ENCODE measurements at regions of chr11 and their contacts with region 1.

Region 1: GRCh38 chr11:65859200-65859811 is 927 bp upstream of the MUS81 start:
- DNase-seq: peak; percentile 87 to 99 (median 95)
- ATAC-seq: peak; percentile 53
- H3K4me3 ChIP-seq: peak overlapping the region; percentile 90
- H3K4me3 Mint-ChIP-seq: peak overlapping the region; percentile 91
- H3K27ac ChIP-seq: peak overlapping the region; percentile 92 to 96
- H3K27ac Mint-ChIP-seq: peak overlapping the region; percentile 94
- H3K4me1 ChIP-seq: peaks cover 78% of the 10 kb centered on the region
- H3K4me1 Mint-ChIP-seq: peaks cover 57% of the 10 kb centered on the region
- H3K27me3 ChIP-seq: no peaks in the 10 kb centered on the region
- H3K27me3 Mint-ChIP-seq: no peaks in the 10 kb centered on the region
- CTCF ChIP-seq: no peak

Region 2: DNA sequence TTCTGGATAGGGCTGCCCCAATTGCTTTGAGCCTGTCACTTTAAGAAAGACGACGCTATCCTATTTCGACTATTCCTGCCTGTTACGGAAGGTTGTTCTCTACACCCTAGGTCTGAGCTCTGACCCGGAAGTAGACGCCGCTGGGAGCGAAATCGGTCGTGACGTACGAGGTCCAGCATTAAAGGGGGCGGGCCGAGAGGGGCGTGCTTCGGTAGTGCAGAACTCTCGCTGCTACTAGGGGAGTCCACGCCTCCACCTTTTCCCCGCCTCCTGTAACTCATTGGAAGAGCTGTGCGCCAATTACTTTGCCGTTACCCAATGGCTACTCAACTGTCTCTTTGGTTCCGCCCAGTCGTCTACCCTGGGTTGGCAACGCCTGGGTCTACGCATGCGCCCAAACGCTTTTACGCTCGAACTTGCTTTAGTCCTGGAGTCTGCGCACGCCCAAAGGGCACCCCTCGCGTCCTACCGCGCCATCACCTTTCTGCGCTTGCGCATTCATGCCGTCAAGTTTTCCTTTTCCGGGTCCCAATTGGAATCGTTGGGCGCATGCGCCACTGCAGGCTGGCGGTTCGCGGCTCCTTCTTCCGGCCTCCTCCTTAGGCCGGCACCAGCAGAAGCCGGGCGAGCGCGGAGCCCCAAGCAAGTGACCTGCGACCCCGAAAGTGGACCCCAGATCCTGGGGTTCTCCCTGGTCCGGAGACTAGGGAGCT is 243.9 kb before region 1 on chr11 and contains the start of gene PCNX3:
- CTCF ChIA-PET with region 1: interaction called, 10 read pairs
- POLR2A ChIA-PET with region 1: interaction called, 43 read pairs
- intact Hi-C with region 1: loop called (anchors 1 to 5 kb)
- DNase-seq: peak; percentile 99 to 100 (median 100)
- ATAC-seq: peak; percentile 87
- H3K4me3 ChIP-seq: peak within 1 kb of the TSS; percentile 93
- H3K4me3 Mint-ChIP-seq: peak within 1 kb of the TSS; percentile 98
- H3K27ac ChIP-seq: peak within 1 kb of the TSS; percentile 94
- H3K27ac Mint-ChIP-seq: peak within 1 kb of the TSS; percentile 93
- H3K4me1 ChIP-seq: peaks cover 67% of the 10 kb centered on the region
- H3K4me1 Mint-ChIP-seq: peaks cover 46% of the 10 kb centered on the region
- H3K27me3 ChIP-seq: no peaks in the 10 kb centered on the region
- H3K27me3 Mint-ChIP-seq: no peaks in the 10 kb centered on the region
- CTCF ChIP-seq: no peak
- total RNA-seq, gene PCNX3: 37.3 to 40.5 TPM

Region 3: GRCh38 chr11:65720237-65720934 is 138.9 kb before region 1 on chr11 and contains the start of gene RNASEH2C:
- CTCF ChIA-PET with region 1: no interaction called
- POLR2A ChIA-PET with region 1: interaction called, 23 read pairs
- intact Hi-C with region 1: no loop called
- DNase-seq: peak; percentile 52 to 89 (median 68)
- ATAC-seq: peak; percentile 94
- H3K4me3 ChIP-seq: peak within 1 kb of the TSS; percentile 85
- H3K4me3 Mint-ChIP-seq: peak within 1 kb of the TSS; percentile 94
- H3K27ac ChIP-seq: peak within 1 kb of the TSS; percentile 69 to 79
- H3K27ac Mint-ChIP-seq: peak within 1 kb of the TSS; percentile 82
- H3K4me1 ChIP-seq: peaks cover 27% of the 10 kb centered on the region
- H3K4me1 Mint-ChIP-seq: peaks cover 27% of the 10 kb centered on the region
- H3K27me3 ChIP-seq: no peaks in the 10 kb centered on the region
- H3K27me3 Mint-ChIP-seq: no peaks in the 10 kb centered on the region
- CTCF ChIP-seq: no peak
- total RNA-seq, gene RNASEH2C: 25.3 to 25.9 TPM

Region 4: GRCh38 chr11:65803797-65804492 is 55.4 kb before region 1 on chr11:
- CTCF ChIA-PET with region 1: no interaction called
- POLR2A ChIA-PET with region 1: no interaction called
- intact Hi-C with region 1: no loop called
- DNase-seq: no peak
- ATAC-seq: no peak
- H3K4me3 ChIP-seq: no peak overlapping the region
- H3K4me3 Mint-ChIP-seq: no peak overlapping the region
- H3K27ac ChIP-seq: no peak overlapping the region
- H3K27ac Mint-ChIP-seq: no peak overlapping the region
- H3K4me1 ChIP-seq: no peaks in the 10 kb centered on the region
- H3K4me1 Mint-ChIP-seq: no peaks in the 10 kb centered on the region
- H3K27me3 ChIP-seq: peaks cover 15 to 26% of the 10 kb centered on the region in 2 experiments
- H3K27me3 Mint-ChIP-seq: peaks cover 28% of the 10 kb centered on the region
- CTCF ChIP-seq: no peak

Region 5: DNA sequence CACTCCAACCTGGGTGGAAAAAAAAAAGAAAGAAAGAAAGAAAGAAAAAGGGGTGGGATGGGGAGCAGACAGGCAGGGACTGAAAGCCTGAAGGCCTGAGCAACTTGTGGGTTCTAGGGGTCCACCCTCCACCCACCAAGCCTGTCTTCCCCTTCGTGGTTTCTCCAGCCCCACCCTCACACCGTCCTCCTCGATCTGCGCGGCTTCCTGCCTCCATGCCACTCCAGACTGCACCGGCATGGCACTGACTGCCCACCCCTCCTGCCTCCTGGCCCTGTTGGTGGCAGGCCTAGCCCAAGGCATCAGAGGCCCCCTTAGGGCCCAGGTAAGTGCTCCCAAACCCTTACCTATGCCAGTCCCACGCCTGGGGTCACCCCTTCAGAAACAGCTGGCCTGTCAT is 20.3 kb after region 1 on chr11 and contains the start of gene CTSW:
- CTCF ChIA-PET with region 1: interaction called, 37 read pairs
- POLR2A ChIA-PET with region 1: interaction called, 137 read pairs
- intact Hi-C with region 1: loop called in 1 of 2 experiments (anchors 1 kb)
- DNase-seq: peak in 7 of 14 experiments; percentile 29 to 82 (median 61)
- ATAC-seq: peak; percentile 63
- H3K4me3 ChIP-seq: peak within 1 kb of the TSS; percentile 50
- H3K4me3 Mint-ChIP-seq: peak within 1 kb of the TSS; percentile 42
- H3K27ac ChIP-seq: peak within 1 kb of the TSS; percentile 9 to 41
- H3K27ac Mint-ChIP-seq: peak within 1 kb of the TSS; percentile 44
- H3K4me1 ChIP-seq: peaks cover 52% of the 10 kb centered on the region
- H3K4me1 Mint-ChIP-seq: peaks cover 17% of the 10 kb centered on the region
- H3K27me3 ChIP-seq: no peaks in the 10 kb centered on the region
- H3K27me3 Mint-ChIP-seq: no peaks in the 10 kb centered on the region
- CTCF ChIP-seq: no peak
- total RNA-seq, gene CTSW: 20.6 to 21.6 TPM

Region 6: DNA sequence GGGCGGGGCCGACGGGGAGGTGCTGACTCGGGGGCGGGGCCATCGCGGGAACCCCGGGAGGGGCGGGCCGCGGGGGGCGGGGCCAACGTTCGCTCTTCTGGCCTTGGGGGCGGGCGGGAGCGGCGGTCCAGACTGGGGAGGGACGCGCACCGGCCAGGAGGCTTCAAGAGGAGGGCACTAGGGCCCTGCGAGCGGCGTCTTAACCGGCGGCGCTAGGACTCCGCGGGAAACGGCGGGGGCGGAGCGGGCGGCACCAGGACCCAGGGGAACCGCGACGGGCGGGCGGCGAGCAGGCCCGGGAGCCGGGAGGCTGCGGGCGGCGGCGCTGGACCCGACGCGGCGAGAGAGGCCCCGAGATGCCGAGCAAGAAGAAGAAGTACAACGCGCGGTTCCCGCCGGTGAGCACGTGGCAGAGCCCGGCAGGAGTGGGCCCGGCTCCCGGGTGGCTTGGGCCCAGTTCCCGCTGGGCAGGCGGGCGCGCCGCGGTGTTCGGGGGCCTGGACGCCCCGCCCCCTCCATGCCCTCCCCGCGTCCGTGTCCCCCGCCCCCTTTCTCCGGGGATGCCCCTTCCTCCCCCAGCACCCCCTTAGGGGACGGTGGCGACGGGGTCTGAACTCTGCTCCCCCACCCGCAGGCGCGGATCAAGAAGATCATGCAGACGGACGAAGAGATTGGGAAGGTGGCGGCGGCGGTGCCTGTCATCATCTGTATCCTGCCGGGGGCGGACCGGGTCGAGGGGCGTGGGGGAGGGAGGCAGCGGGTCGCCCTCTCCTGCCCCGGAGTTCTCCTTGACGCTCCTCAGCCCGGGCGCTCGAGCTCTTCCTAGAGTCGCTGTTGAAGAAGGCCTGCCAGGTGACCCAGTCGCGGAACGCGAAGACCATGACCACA is 60.1 kb after region 1 on chr11 and contains the start of gene DRAP1:
- CTCF ChIA-PET with region 1: interaction called, 6 read pairs
- POLR2A ChIA-PET with region 1: interaction called, 10 read pairs
- intact Hi-C with region 1: loop called (anchors 1 to 2 kb)
- DNase-seq: peak; percentile 97 to 100 (median 99)
- ATAC-seq: peak; percentile 88
- H3K4me3 ChIP-seq: peak within 1 kb of the TSS; percentile 100
- H3K4me3 Mint-ChIP-seq: peak within 1 kb of the TSS; percentile 94
- H3K27ac ChIP-seq: peak within 1 kb of the TSS; percentile 83 to 86
- H3K27ac Mint-ChIP-seq: peak within 1 kb of the TSS; percentile 92
- H3K4me1 ChIP-seq: peaks cover 54% of the 10 kb centered on the region
- H3K4me1 Mint-ChIP-seq: peaks cover 47% of the 10 kb centered on the region
- H3K27me3 ChIP-seq: no peaks in the 10 kb centered on the region
- H3K27me3 Mint-ChIP-seq: no peaks in the 10 kb centered on the region
- CTCF ChIP-seq: no peak
- total RNA-seq, gene DRAP1: 58.6 to 59.1 TPM

Region 7: DNA sequence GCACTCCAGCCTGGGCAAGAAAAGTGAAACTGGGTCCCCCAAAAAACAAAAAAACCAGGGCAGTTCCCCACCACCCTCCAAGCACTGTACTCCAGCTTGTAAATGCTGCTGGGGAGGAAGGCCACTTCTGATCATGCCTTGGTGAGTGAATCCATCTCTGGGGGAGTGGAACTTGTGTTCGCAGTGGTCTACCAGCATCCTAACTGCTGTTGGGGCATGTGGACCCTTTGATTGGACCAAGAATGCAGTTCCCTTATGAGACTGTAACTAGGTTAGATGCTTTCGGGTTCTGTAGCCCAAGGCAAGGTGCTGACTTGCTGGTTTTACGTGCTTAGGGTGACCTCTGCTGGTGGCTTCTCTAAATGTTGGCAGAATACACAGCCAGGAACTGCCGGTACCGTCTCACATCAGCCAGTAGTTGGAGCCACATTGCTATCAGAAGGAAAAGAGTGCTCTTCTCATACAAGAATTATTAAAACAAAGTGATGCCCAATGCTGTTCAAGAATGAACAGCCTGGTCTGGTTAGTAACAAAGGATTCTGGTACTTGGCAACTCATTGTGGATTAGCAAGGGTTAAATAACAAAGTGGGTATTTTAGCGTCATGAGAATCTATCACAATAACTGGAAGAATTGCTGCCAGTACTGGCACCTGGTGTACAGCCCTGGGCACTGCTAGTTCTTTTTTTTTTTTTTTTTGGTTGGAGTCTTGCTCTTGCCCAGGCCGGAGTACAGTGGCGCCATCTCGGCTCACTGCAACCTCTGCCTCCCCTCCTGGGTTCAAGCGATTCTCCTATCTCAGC is 129.7 kb after region 1 on chr11:
- CTCF ChIA-PET with region 1: no interaction called
- POLR2A ChIA-PET with region 1: interaction called, 3 read pairs
- intact Hi-C with region 1: loop called in 1 of 2 experiments (anchors 1 kb)
- DNase-seq: peak; percentile 82 to 96 (median 89)
- ATAC-seq: peak; percentile 98
- H3K4me3 ChIP-seq: no peak overlapping the region
- H3K4me3 Mint-ChIP-seq: no peak overlapping the region
- H3K27ac ChIP-seq: no peak overlapping the region
- H3K27ac Mint-ChIP-seq: peak overlapping the region; percentile 61
- H3K4me1 ChIP-seq: peaks cover 10% of the 10 kb centered on the region
- H3K4me1 Mint-ChIP-seq: peaks cover 6% of the 10 kb centered on the region
- H3K27me3 ChIP-seq: no peaks in the 10 kb centered on the region
- H3K27me3 Mint-ChIP-seq: no peaks in the 10 kb centered on the region
- CTCF ChIP-seq: peak; percentile 96

Region 8: DNA sequence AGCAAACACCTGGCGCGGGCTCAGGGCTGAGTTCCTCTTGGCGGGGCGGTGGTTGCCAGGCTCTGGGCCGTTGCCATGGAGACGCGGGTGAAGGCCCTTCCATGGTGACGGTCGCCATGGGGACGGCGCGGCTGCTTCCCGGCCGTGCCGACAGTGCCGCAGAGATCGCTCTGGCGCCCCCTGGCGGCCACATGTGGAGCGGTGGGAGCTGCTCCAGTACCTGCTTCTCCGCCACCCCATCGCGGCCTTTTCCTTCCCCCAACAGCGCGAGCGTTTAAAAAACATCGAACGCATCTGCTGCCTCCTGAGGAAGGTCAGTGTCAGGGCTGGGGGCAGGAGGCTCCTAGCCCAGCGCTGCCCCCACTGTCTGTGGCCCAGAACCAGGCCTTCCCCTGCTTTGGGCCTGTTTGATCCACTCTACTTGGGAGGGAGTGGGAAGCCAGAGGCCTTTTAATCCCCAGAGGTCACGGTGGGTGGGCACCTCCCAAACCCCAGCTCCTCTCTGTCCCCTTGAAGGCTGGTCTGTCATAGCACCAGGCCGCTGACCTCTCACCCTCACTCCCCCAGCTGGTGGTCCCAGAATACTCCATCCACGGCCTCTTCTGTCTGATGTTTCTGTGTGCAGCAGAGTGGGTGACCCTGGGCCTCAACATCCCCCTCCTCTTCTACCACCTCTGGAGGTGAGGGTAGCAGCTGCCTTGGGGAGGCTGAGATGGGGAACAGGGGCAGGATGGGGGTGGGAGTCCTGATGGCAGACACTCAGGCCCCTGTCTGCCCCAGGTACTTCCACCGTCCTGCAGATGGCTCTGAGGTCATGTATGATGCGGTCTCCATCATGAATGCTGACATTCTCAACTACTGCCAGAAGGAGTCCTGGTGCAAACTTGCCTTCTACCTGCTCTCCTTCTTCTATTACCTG is 423.4 kb after region 1 on chr11:
- CTCF ChIA-PET with region 1: interaction called, 4 read pairs
- POLR2A ChIA-PET with region 1: no interaction called
- intact Hi-C with region 1: loop called in 1 of 2 experiments (anchors 10 kb)
- DNase-seq: peak; percentile 99 to 100 (median 100)
- ATAC-seq: peak; percentile 80
- H3K4me3 ChIP-seq: no peak overlapping the region
- H3K4me3 Mint-ChIP-seq: peak overlapping the region; percentile 79
- H3K27ac ChIP-seq: peak overlapping the region in 1 of 2 donors; percentile 53
- H3K27ac Mint-ChIP-seq: peak overlapping the region; percentile 81
- H3K4me1 ChIP-seq: peaks cover 52% of the 10 kb centered on the region
- H3K4me1 Mint-ChIP-seq: peaks cover 40% of the 10 kb centered on the region
- H3K27me3 ChIP-seq: no peaks in the 10 kb centered on the region
- H3K27me3 Mint-ChIP-seq: no peaks in the 10 kb centered on the region
- CTCF ChIP-seq: peak; percentile 91